Activated CD4-positive, alpha-beta T cell treated with anti-CD3 and anti-CD28 coated beads for 36 hours (primary cell): ENCODE measurements at regions of chr1 and their contacts with region 1.

Region 1: DNA sequence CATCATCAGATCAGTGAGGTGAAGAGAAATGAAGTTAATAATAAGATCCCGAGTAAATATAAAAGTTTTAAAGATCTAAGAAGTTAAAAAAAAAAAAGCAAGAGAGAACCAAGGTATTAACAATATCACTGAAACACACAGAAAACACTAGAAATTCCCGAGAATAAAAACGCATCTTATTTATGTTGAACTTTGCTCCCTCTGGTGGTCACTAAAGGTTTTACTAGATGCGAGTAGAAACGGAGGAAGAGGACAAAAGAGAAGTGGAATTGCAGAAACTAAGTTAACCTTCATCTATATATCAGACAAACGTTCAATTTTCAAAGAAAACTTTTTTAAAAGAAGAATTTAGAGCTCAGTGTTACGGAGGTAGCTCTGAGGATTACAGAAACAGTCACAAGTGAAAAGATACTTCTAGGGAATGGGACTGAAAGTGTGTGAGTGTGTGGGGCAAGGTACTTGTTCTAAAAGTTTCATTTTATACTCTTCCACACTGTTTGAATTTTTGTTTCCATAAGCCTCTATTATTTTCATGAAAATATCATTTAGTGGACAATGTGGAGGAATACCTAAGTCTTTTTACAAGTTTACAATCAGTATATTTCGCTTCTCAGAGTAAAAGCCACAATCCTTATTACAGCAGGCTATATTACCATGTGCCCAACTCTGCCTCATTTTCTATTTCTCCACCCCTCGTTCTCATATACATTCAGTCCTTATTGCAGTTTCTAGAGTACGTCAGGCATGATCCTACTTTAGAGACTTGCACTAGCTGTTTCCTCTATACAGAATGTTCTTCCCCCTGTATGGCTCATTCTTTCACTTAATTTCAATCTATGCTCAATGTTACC is 19.7 kb downstream of the ACBD6 start:
- DNase-seq: no peak
- ATAC-seq: peak; percentile 64
- H3K4me3 Mint-ChIP-seq: no peak overlapping the region
- H3K27ac Mint-ChIP-seq: no peak overlapping the region
- H3K4me1 Mint-ChIP-seq: peaks cover 17% of the 10 kb centered on the region
- H3K27me3 Mint-ChIP-seq: no peaks in the 10 kb centered on the region

Region 2: GRCh38 chr1:179706339-179706941 is 776.2 kb before region 1 on chr1:
- CTCF ChIA-PET with region 1: no interaction called
- POLR2A ChIA-PET with region 1: no interaction called
- intact Hi-C with region 1: loop called in 1 of 2 experiments (anchors 10 kb)
- DNase-seq: peak; percentile 79
- ATAC-seq: peak; percentile 55
- H3K4me3 Mint-ChIP-seq: no peak overlapping the region
- H3K27ac Mint-ChIP-seq: peak overlapping the region; percentile 38
- H3K4me1 Mint-ChIP-seq: peaks cover 17% of the 10 kb centered on the region
- H3K27me3 Mint-ChIP-seq: no peaks in the 10 kb centered on the region

Region 3: DNA sequence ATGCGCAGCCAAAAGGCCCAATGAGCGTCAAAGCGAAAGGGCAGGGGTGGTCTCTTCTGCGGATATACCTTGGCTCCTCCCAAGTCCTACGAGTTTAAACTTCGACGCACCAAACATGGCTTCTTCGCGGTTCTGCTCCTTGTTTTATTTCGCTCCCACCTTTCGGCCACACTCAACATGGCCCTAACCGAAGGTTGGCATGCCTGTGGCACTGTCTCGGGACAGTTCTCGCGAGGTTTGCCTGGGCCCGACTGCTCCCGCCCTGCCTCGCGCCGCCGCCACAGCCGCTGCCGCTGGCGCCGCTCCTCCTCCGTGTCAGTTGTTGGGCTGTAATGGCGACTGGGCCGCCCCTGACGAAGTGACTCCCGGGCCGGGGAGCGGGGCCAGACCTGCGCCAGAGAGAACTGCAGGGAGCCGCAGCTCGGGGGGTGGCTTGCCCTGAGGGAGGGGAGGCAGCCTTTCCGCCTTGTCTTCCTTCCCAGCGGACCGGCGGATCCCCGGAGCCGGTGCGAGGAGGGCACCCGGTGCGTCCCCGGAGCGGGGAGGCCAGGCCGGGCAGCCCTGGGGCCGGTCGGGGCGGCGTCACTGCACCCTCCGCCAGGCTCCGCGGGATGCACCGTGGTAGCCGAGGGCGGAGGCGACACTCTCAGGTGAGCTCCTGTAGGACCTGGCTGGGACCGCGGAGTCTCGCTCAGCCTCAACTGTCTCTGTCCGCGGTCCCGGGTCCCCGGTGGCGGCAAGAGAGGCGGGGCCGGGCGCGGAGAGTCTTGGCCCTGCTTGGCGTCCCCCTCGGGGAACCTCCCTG is 528.0 kb before region 1 on chr1 and contains the start of gene CEP350:
- CTCF ChIA-PET with region 1: no interaction called
- POLR2A ChIA-PET with region 1: no interaction called
- intact Hi-C with region 1: no loop called
- DNase-seq: peak; percentile 99
- ATAC-seq: peak; percentile 94
- H3K4me3 Mint-ChIP-seq: peak within 1 kb of the TSS; percentile 82
- H3K27ac Mint-ChIP-seq: peak within 1 kb of the TSS; percentile 98
- H3K4me1 Mint-ChIP-seq: peaks cover 47% of the 10 kb centered on the region
- H3K27me3 Mint-ChIP-seq: no peaks in the 10 kb centered on the region
- total RNA-seq, gene CEP350: 38.2 to 42.1 TPM

Region 4: GRCh38 chr1:180188091-180188506 is 294.6 kb before region 1 on chr1:
- CTCF ChIA-PET with region 1: interaction called, 5 read pairs
- POLR2A ChIA-PET with region 1: no interaction called
- intact Hi-C with region 1: loop called in 1 of 2 experiments (anchors 5 kb)
- DNase-seq: peak; percentile 39
- ATAC-seq: no peak
- H3K4me3 Mint-ChIP-seq: no peak overlapping the region
- H3K27ac Mint-ChIP-seq: no peak overlapping the region
- H3K4me1 Mint-ChIP-seq: no peaks in the 10 kb centered on the region
- H3K27me3 Mint-ChIP-seq: no peaks in the 10 kb centered on the region

Region 5: DNA sequence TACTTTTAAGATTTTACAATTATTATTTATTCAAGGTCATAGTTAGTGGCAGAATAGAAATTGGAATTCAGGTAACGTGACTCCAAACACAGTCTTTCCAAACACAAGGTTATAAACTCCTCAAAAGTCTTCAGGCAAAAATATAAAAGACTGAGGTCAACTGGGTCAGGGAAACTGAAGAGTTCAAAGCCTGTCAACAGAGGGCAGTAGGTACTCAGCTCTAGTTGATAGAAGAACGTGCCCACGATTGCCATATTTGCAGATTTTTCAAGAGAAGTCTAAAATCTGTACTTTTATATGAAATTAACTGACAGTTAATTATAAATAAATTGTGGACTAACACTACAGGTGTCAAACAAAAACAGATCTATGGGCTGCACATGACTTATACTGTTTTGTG is 117.6 kb before region 1 on chr1:
- CTCF ChIA-PET with region 1: interaction called, 3 read pairs
- POLR2A ChIA-PET with region 1: no interaction called
- intact Hi-C with region 1: loop called in 1 of 2 experiments (anchors 2 kb)
- DNase-seq: no peak
- ATAC-seq: no peak
- H3K4me3 Mint-ChIP-seq: no peak overlapping the region
- H3K27ac Mint-ChIP-seq: no peak overlapping the region
- H3K4me1 Mint-ChIP-seq: peaks cover 3% of the 10 kb centered on the region
- H3K27me3 Mint-ChIP-seq: no peaks in the 10 kb centered on the region

Region 6: GRCh38 chr1:180494370-180494769 is 11.7 kb after region 1 on chr1:
- CTCF ChIA-PET with region 1: interaction called, 31 read pairs
- POLR2A ChIA-PET with region 1: no interaction called
- intact Hi-C with region 1: no loop called
- DNase-seq: no peak
- ATAC-seq: no peak
- H3K4me3 Mint-ChIP-seq: no peak overlapping the region
- H3K27ac Mint-ChIP-seq: no peak overlapping the region
- H3K4me1 Mint-ChIP-seq: peaks cover 15% of the 10 kb centered on the region
- H3K27me3 Mint-ChIP-seq: no peaks in the 10 kb centered on the region